ENCODE measurements at regions of chr11 and their contacts with region 1.

Region 1: DNA sequence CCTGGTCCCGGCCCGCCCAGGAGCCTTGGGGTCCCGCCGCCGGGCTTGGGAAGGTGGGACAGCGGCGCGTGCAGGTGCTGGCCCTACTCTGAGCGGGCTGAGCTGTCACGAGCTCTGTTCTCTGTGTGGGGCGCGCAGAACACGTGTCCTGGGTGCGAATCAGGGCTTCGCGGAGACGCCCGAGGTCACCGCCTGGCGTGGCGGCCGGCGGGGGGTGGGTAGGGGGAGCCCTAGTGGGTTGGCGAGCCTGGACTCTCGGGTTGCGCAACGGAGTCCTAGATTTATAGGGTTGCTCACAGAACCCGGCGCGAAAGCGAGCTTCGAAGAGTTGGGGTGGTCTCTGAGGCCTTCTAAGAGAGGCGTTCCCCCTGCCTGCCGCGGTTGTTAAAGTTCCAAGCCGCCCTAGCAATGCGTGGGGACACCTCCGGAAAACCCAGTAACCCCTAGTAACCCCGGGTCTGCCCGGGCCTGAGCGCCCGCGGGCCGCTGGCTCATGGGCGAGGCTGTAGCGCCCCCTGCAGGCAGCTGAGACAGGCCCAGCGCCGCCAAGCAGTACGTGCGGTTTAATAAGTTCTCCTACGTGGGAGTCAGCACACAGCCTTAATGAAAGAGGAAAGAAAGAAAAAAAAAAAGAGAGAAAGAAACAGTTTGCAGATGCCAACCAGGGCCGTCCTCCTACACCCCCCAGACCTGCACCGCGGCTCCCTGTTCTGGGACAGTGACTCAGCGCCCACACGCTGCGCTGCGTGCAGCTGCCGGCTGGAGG is 2.8 kb downstream of the ADM start:
- DNase-seq: peak; percentile 83 to 87
- H3K4me3 ChIP-seq: peak overlapping the region; percentile 87
- H3K27ac ChIP-seq: peak overlapping the region; percentile 98
- H3K4me1 ChIP-seq: peaks cover 25% of the 10 kb centered on the region
- H3K27me3 ChIP-seq: no peaks in the 10 kb centered on the region
- CTCF ChIP-seq: peak; percentile 95

Region 2: DNA sequence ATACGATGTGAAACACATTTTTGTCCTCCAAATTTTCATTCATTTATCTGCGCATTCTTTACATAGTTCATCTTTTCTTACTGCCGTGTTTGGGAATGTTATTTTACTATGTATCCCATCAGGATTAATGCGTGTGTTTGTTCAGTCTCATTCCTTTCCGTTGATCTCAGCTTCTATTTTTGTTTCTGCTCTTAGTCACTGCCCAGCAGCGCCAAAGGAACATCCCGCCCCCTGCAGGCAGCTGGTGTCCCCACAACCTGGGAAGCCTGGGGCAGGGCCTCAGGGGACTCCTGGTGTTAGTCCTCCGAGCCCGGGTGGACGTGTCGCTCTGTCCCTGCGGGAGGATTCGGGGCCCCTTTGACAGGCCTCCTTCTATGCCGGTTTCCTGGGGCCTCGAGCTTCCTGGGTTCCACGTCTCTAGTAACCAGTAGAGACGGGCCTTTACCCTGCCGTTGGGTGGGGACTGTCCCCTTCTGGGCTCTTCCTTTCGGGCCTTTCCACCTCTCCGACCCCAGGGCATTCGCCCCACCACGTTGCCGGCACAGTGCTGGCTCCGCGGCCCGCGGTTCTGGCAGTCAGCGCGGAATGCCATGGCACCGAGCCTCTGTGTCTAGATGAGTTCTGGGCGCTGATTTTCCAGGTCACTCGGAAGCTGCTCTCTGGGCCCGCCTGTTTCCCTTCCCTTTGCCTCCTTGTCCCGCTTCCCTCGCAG is 694.4 kb before region 1 on chr11:
- CTCF ChIA-PET with region 1: no interaction called
- POLR2A ChIA-PET with region 1: no interaction called
- intact Hi-C with region 1: loop called (anchors 5 kb)
- DNase-seq: peak; percentile 90 to 92
- H3K4me3 ChIP-seq: peak overlapping the region; percentile 75
- H3K27ac ChIP-seq: peak overlapping the region; percentile 96
- H3K4me1 ChIP-seq: peaks cover 25% of the 10 kb centered on the region
- H3K27me3 ChIP-seq: no peaks in the 10 kb centered on the region
- CTCF ChIP-seq: peak; percentile 87

Region 3: DNA sequence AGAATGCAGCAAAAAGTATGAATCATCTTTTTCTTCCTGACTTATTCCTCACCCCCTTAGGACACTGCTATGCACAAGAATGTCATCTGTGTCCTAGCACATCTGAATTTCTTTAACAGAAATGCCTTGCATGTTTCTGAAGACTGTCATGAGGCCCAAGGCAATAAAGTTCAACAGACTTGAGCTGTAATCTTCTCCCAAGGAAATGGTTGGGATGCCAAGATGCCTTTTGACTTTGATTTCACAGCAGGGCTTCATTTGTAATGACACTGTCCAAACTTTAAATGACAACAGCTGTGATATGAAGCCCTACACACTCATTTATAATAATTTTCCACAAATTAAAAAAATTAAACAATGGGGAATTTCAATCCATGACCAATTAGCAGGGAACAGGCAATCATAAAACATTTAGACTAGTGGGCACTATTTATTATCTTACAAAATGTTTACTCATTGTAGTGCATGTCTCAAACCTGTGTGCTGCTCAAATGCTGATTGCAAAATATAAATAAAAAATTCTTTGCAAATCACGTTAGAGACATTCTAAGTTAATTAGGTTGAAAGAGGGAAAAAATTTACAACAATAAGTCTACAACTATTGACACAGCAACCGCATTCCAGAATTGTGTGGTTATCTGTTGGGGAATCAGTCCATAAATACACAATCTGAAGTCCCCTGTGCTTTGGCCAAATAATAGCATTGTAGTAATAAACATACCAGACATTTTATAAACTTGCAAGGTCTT is 401.4 kb before region 1 on chr11:
- CTCF ChIA-PET with region 1: no interaction called
- POLR2A ChIA-PET with region 1: no interaction called
- intact Hi-C with region 1: loop called (anchors 5 kb)
- DNase-seq: peak; percentile 35 to 98
- H3K4me3 ChIP-seq: 0 out of 2 replicates have a peak overlapping the region, but pooled peaks have one; percentile 0
- H3K27ac ChIP-seq: peak overlapping the region; percentile 92
- H3K4me1 ChIP-seq: peaks cover 37% of the 10 kb centered on the region
- H3K27me3 ChIP-seq: no peaks in the 10 kb centered on the region
- CTCF ChIP-seq: no peak

Region 4: GRCh38 chr11:10181811-10182210 is 125.8 kb before region 1 on chr11:
- CTCF ChIA-PET with region 1: interaction called, 3 read pairs
- POLR2A ChIA-PET with region 1: interaction called, 17 read pairs
- intact Hi-C with region 1: no loop called
- DNase-seq: no peak
- H3K4me3 ChIP-seq: no peak overlapping the region
- H3K27ac ChIP-seq: no peak overlapping the region
- H3K4me1 ChIP-seq: no peaks in the 10 kb centered on the region
- H3K27me3 ChIP-seq: no peaks in the 10 kb centered on the region
- CTCF ChIP-seq: peak; percentile 43; the same call in 1 of the 2 replicates

Region 5: GRCh38 chr11:10247011-10247410 is 60.6 kb before region 1 on chr11:
- CTCF ChIA-PET with region 1: no interaction called
- POLR2A ChIA-PET with region 1: no interaction called
- intact Hi-C with region 1: no loop called
- DNase-seq: no peak
- H3K4me3 ChIP-seq: no peak overlapping the region
- H3K27ac ChIP-seq: no peak overlapping the region
- H3K4me1 ChIP-seq: no peaks in the 10 kb centered on the region
- H3K27me3 ChIP-seq: no peaks in the 10 kb centered on the region
- CTCF ChIP-seq: no peak

Region 6: DNA sequence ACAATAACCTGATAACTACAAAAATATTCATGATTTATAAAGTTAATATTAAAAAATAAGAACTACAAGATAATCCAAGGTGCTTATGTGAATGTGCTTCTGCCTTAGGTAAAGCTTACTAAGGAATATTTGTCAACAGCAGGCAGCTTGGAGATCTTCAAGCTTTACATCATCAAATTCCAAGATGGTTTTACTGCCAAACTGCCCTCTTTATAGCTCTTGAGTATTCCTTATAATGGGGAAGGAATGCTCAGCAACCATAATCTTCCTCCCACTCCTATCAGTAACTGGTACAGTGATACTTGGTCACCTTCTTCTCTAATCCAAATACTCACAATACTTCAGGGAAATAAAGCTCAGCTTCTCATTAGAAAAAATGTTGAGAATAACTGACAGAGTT is 43.7 kb before region 1 on chr11:
- CTCF ChIA-PET with region 1: no interaction called
- POLR2A ChIA-PET with region 1: no interaction called
- intact Hi-C with region 1: no loop called
- DNase-seq: no peak
- H3K4me3 ChIP-seq: no peak overlapping the region
- H3K27ac ChIP-seq: no peak overlapping the region
- H3K4me1 ChIP-seq: no peaks in the 10 kb centered on the region
- H3K27me3 ChIP-seq: no peaks in the 10 kb centered on the region
- CTCF ChIP-seq: no peak

Region 7: DNA sequence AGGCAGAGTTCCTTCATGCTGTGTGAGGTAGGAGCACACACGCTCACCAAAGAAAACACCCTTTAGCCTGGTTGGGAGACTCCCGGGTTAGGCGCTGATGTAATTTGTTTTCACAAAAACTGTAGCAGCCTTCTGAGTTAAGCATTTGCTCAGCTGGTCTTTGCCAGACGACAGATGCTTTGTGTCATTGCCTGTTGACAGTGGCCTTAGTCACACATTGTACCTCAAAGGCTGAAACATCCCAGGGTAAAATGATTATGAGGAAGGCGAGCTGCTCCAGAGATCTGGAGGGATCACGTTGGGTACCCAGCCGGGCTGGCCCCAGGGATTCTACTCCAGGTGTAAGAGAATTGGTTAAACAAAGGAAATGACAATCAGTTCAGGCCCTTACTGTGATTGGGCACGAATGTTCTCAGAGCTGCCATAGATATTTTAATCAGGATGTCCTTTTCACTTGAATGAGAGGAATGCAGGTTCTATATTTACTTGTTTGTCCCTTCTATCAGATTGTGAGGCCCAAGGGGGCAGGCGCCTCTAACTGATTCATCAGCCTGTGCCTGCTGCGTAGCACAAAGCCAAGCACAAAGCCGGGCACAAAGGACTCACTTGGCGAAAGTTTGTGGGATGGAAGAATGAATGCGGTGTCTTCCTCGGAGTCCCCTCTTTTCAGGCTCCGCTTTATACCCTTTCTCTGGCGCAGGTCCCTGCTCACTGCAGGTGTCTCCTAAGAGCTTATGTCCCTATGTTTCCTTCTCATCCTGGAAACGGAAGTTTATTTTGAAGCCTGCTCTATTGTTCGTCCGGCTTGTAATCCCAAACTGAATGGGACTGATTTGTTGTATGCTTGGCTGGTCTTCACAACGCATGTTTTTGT is 44.4 kb after region 1 on chr11:
- CTCF ChIA-PET with region 1: interaction called, 8 read pairs
- POLR2A ChIA-PET with region 1: interaction called, 15 read pairs
- intact Hi-C with region 1: loop called (anchors 5 kb)
- DNase-seq: peak; percentile 37 to 92
- H3K4me3 ChIP-seq: peak overlapping the region; percentile 35; the same call in 1 of the 2 replicates
- H3K27ac ChIP-seq: peak overlapping the region; percentile 72
- H3K4me1 ChIP-seq: peaks cover 45% of the 10 kb centered on the region
- H3K27me3 ChIP-seq: no peaks in the 10 kb centered on the region
- CTCF ChIP-seq: no peak

Region 8: GRCh38 chr11:10455637-10456487 is 148.2 kb after region 1 on chr11:
- CTCF ChIA-PET with region 1: interaction called, 3 read pairs
- POLR2A ChIA-PET with region 1: interaction called, 12 read pairs
- intact Hi-C with region 1: loop called (anchors 2 kb)
- DNase-seq: peak; percentile 43 to 62
- H3K4me3 ChIP-seq: peak overlapping the region; percentile 57
- H3K27ac ChIP-seq: peak overlapping the region; percentile 79
- H3K4me1 ChIP-seq: peaks cover 54% of the 10 kb centered on the region
- H3K27me3 ChIP-seq: no peaks in the 10 kb centered on the region
- CTCF ChIP-seq: no peak

Region 9: GRCh38 chr11:10735481-10736475 is 428.2 kb after region 1 on chr11:
- CTCF ChIA-PET with region 1: no interaction called
- POLR2A ChIA-PET with region 1: no interaction called
- intact Hi-C with region 1: loop called (anchors 5 kb)
- DNase-seq: peak; percentile 90 to 93
- H3K4me3 ChIP-seq: peak overlapping the region; percentile 39; the same call in 1 of the 2 replicates
- H3K27ac ChIP-seq: peak overlapping the region; percentile 78
- H3K4me1 ChIP-seq: peaks cover 5% of the 10 kb centered on the region; the same call in 1 of the 2 replicates
- H3K27me3 ChIP-seq: no peaks in the 10 kb centered on the region
- CTCF ChIP-seq: peak; percentile 90

Measured in PC-9 (cell line).